CD8-positive, alpha-beta T cell (primary cell): ENCODE measurements at regions of chr15 and their contacts with region 1.

Region 1: DNA sequence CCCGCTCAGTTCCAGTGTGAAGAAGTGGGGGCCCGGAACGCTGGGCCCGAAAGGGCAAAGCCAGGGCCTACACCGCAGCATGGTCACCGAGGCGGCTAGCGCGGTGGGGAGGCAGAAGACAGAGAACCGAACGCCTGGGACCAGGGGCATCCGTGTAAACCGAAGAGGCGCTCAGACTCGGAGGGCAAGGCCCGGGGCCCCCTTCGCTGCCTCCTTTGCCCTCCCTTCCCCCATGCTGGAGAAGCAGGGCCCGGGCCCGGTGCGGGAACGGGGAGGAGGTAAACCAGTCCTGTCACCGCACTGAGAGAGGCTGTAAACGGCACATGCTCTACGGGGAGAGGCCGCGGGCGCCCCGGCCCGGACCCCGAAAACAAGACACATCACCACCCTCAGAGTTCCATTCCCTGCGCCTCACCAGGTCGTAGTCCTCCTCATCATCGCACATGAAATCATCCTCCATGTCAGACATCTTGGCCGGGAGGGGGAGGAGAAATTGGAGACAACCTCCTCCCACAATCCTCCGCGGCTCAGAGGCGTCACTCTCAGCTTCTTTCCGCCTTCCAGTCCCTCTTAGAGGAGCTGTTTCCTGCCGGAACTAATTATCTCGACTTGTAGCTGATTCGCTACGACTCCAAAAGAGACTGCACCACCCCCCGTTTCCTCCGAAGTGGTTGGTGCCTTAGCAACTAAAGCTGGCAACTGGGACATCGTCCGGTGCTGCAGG is at the start of gene COPS2:
- DNase-seq: peak; percentile 84 to 98 (median 93)
- ATAC-seq: peak; percentile 94
- H3K4me3 ChIP-seq: peak within 1 kb of the TSS; percentile 83 to 90
- H3K4me3 Mint-ChIP-seq: peak within 1 kb of the TSS; percentile 99
- H3K27ac ChIP-seq: peak within 1 kb of the TSS; percentile 83 to 92
- H3K27ac Mint-ChIP-seq: peak within 1 kb of the TSS; percentile 98
- H3K4me1 ChIP-seq: peaks cover 36% of the 10 kb centered on the region
- H3K4me1 Mint-ChIP-seq: peaks cover 55% of the 10 kb centered on the region
- H3K27me3 ChIP-seq: no peaks in the 10 kb centered on the region
- H3K27me3 Mint-ChIP-seq: no peaks in the 10 kb centered on the region
- CTCF ChIP-seq: no peak
- total RNA-seq, gene COPS2: 147 to 159 TPM

Region 2: GRCh38 chr15:48810414-48811317 is 344.6 kb before region 1 on chr15 and contains the start of gene CEP152:
- CTCF ChIA-PET with region 1: no interaction called
- POLR2A ChIA-PET with region 1: interaction called, 5 read pairs
- intact Hi-C with region 1: loop called (anchors 1 kb)
- DNase-seq: peak; percentile 96 to 100 (median 98)
- ATAC-seq: peak; percentile 94
- H3K4me3 ChIP-seq: peak within 1 kb of the TSS; percentile 83 to 95
- H3K4me3 Mint-ChIP-seq: peak within 1 kb of the TSS; percentile 90
- H3K27ac ChIP-seq: peak within 1 kb of the TSS; percentile 64 to 73
- H3K27ac Mint-ChIP-seq: peak within 1 kb of the TSS; percentile 71
- H3K4me1 ChIP-seq: peaks cover 13% of the 10 kb centered on the region
- H3K4me1 Mint-ChIP-seq: peaks cover 33% of the 10 kb centered on the region
- H3K27me3 ChIP-seq: no peaks in the 10 kb centered on the region
- H3K27me3 Mint-ChIP-seq: peaks cover 6% of the 10 kb centered on the region
- CTCF ChIP-seq: no peak
- total RNA-seq, gene CEP152: 3.9 to 5.1 TPM

Region 3: DNA sequence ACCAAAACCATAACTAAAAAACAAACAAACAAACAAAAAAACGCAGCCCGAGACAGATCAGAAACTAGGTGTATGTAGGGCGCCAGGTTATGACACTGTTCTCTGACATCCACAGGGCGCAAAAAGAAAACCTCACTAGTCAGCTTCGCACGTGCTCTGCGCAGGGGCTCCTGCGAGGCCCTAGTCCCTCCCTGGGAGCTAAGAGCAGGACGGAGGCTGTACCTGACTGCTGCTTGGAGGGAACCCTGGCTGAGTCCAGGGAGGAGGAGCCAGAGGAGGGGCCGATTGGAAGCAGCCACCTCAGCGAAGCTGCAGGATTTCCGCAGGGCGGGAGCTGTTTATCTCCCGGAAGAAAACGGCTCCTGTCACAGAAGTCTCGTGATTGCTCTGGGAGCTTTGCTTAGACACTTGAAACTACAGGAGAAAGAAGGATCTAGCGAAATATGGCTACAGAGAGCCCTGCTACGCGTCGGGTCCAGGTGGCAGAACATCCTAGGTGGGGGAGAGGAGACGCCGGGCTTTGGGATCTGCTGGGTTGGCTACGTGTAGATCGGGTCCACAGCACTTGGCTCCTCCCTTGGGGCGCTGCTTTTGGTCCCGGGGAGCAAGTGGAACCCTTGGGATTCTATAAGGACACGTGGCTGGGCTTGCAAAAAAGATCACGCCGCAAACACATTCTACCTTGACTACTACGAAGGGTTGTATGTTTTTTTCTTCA is 14.8 kb after region 1 on chr15 and contains the start of gene GALK2:
- CTCF ChIA-PET with region 1: interaction called, 8 read pairs
- POLR2A ChIA-PET with region 1: interaction called, 27 read pairs
- intact Hi-C with region 1: loop called (anchors 1 kb)
- DNase-seq: peak; percentile 58 to 91 (median 81)
- ATAC-seq: peak; percentile 99
- H3K4me3 ChIP-seq: peak within 1 kb of the TSS; percentile 67 to 75
- H3K4me3 Mint-ChIP-seq: peak within 1 kb of the TSS; percentile 96
- H3K27ac ChIP-seq: peak within 1 kb of the TSS; percentile 74 to 88
- H3K27ac Mint-ChIP-seq: peak within 1 kb of the TSS; percentile 98
- H3K4me1 ChIP-seq: peaks cover 11% of the 10 kb centered on the region
- H3K4me1 Mint-ChIP-seq: peaks cover 43% of the 10 kb centered on the region
- H3K27me3 ChIP-seq: no peaks in the 10 kb centered on the region
- H3K27me3 Mint-ChIP-seq: no peaks in the 10 kb centered on the region
- CTCF ChIP-seq: no peak
- total RNA-seq, gene GALK2: 7.7 to 10.7 TPM